CD14-positive monocyte (primary cell): ENCODE measurements at regions of chr1 and their contacts with region 1.

Region 1: DNA sequence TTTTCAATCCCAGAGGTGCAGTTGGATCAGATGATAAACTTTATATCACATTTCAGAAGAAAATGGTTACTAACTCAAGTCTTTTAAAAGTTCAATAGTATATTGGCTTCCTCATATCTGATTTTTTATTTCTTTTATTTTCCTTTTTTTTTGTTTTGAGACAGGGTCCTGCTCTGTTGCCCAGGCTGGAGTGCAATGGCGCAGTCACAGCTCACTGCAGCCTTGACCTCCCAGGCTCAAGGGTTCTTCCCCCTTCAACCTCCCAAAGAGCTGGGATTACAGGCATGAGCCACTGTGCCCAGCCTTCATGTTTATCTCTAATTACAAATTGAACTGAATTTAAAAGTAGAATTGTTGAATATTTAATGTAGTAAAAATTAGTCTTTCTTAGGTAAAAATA is 13.9 kb downstream of the FLVCR1 start:
- DNase-seq: no peak
- H3K4me3 ChIP-seq: no peak overlapping the region
- H3K4me3 Mint-ChIP-seq: no peak overlapping the region
- H3K27ac ChIP-seq: no peak overlapping the region
- H3K27ac Mint-ChIP-seq: peak overlapping the region in 1 of 7 donors; percentile 64
- H3K4me1 ChIP-seq: no peaks in the 10 kb centered on the region
- H3K4me1 Mint-ChIP-seq: no peaks in the 10 kb centered on the region
- H3K27me3 ChIP-seq: no peaks in the 10 kb centered on the region
- H3K27me3 Mint-ChIP-seq: no peaks in the 10 kb centered on the region
- CTCF ChIP-seq: no peak

Region 2: DNA sequence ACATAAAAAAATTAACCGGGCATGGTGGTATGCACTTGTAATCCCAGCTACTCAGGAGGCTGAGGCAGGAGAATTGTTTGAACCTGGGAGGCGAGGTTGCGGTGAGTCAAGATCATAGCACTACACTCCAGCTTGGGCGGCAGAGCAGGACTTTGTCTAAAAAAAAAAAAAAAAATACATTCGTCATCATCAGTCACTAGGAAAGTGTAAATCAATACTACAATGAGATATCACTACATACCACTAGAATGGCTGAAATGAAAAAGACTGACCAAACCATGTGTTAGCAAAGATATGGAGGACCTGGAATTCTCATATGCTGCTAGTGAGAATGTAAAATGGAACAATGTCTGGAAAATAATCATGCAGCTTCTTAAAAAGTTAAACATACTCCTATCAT is 33.8 kb before region 1 on chr1:
- intact Hi-C with region 1: loop called in 1 of 2 experiments (anchors 2 kb)
- DNase-seq: no peak
- H3K4me3 ChIP-seq: no peak overlapping the region
- H3K4me3 Mint-ChIP-seq: no peak overlapping the region
- H3K27ac ChIP-seq: no peak overlapping the region
- H3K27ac Mint-ChIP-seq: no peak overlapping the region
- H3K4me1 ChIP-seq: no peaks in the 10 kb centered on the region
- H3K4me1 Mint-ChIP-seq: no peaks in the 10 kb centered on the region
- H3K27me3 ChIP-seq: no peaks in the 10 kb centered on the region
- H3K27me3 Mint-ChIP-seq: peaks cover 2 to 5% (median 4%) of the 10 kb centered on the region in 3 donors
- CTCF ChIP-seq: no peak

Region 3: GRCh38 chr1:212857992-212858460 is 13.9 kb before region 1 on chr1 and contains the start of gene FLVCR1:
- intact Hi-C with region 1: no loop called
- DNase-seq: peak; percentile 91 to 93 (median 91)
- H3K4me3 ChIP-seq: peak within 1 kb of the TSS; percentile 58 to 86 (median 85)
- H3K4me3 Mint-ChIP-seq: peak within 1 kb of the TSS; percentile 96 to 98
- H3K27ac ChIP-seq: peak within 1 kb of the TSS; percentile 75 to 93
- H3K27ac Mint-ChIP-seq: peak within 1 kb of the TSS; percentile 96 to 99 (median 98)
- H3K4me1 ChIP-seq: peaks cover 46 to 51% of the 10 kb centered on the region in 2 donors
- H3K4me1 Mint-ChIP-seq: peaks cover 15% of the 10 kb centered on the region
- H3K27me3 ChIP-seq: no peaks in the 10 kb centered on the region
- H3K27me3 Mint-ChIP-seq: peaks cover 0 to 2% (median 0%) of the 10 kb centered on the region in 3 donors
- CTCF ChIP-seq: no peak
- polyA plus RNA-seq, gene FLVCR1: 1.8 to 5.5 (median 2.8) TPM